B cell (primary cell): ENCODE measurements at regions of chr17 and their contacts with region 1.

Region 1: GRCh38 chr17:43024407-43025289 is at the start of gene RND2:
- DNase-seq: peak; percentile 92
- ATAC-seq: peak; percentile 71
- H3K4me3 ChIP-seq: peak within 1 kb of the TSS; percentile 49 to 77 (median 68)
- H3K4me3 Mint-ChIP-seq: peak within 1 kb of the TSS; percentile 88
- H3K27ac ChIP-seq: peak within 1 kb of the TSS in 1 of 2 donors; percentile 63
- H3K27ac Mint-ChIP-seq: peak within 1 kb of the TSS; percentile 87
- H3K4me1 ChIP-seq: peaks cover 9 to 31% of the 10 kb centered on the region in 2 donors
- H3K4me1 Mint-ChIP-seq: peaks cover 29% of the 10 kb centered on the region
- H3K27me3 ChIP-seq: no peaks in the 10 kb centered on the region
- H3K27me3 Mint-ChIP-seq: no peaks in the 10 kb centered on the region
- CTCF ChIP-seq: peak; percentile 62
- total RNA-seq, gene RND2: 0.44 and 1.2 TPM in 2 replicates

Region 2: GRCh38 chr17:42980398-42981397 is 44.0 kb before region 1 on chr17 and contains the start of gene RUNDC1:
- CTCF ChIA-PET with region 1: interaction called, 5 read pairs
- POLR2A ChIA-PET with region 1: interaction called, 5 read pairs
- intact Hi-C with region 1: loop called (anchors 1 kb)
- DNase-seq: peak; percentile 97
- ATAC-seq: peak; percentile 82
- H3K4me3 ChIP-seq: peak within 1 kb of the TSS; percentile 83 to 90 (median 88)
- H3K4me3 Mint-ChIP-seq: peak within 1 kb of the TSS; percentile 99
- H3K27ac ChIP-seq: peak within 1 kb of the TSS; percentile 80 to 86
- H3K27ac Mint-ChIP-seq: peak within 1 kb of the TSS; percentile 96
- H3K4me1 ChIP-seq: peaks cover 44 to 56% of the 10 kb centered on the region in 2 donors
- H3K4me1 Mint-ChIP-seq: peaks cover 48% of the 10 kb centered on the region
- H3K27me3 ChIP-seq: no peaks in the 10 kb centered on the region
- H3K27me3 Mint-ChIP-seq: no peaks in the 10 kb centered on the region
- CTCF ChIP-seq: peak; percentile 42
- total RNA-seq, gene RUNDC1: 43.7 and 45.6 TPM in 2 replicates

Region 3: GRCh38 chr17:43006639-43007551 is 17.8 kb before region 1 on chr17 and contains the start of gene IFI35:
- CTCF ChIA-PET with region 1: interaction called, 6 read pairs
- POLR2A ChIA-PET with region 1: interaction called, 3 read pairs
- intact Hi-C with region 1: loop called (anchors 1 kb)
- DNase-seq: peak; percentile 89
- ATAC-seq: peak; percentile 99
- H3K4me3 ChIP-seq: peak within 1 kb of the TSS; percentile 73 to 91 (median 82)
- H3K4me3 Mint-ChIP-seq: peak within 1 kb of the TSS; percentile 100
- H3K27ac ChIP-seq: peak within 1 kb of the TSS; percentile 83 to 93
- H3K27ac Mint-ChIP-seq: peak within 1 kb of the TSS; percentile 100
- H3K4me1 ChIP-seq: peaks cover 8 to 13% of the 10 kb centered on the region in 2 donors
- H3K4me1 Mint-ChIP-seq: peaks cover 16% of the 10 kb centered on the region
- H3K27me3 ChIP-seq: no peaks in the 10 kb centered on the region
- H3K27me3 Mint-ChIP-seq: no peaks in the 10 kb centered on the region
- CTCF ChIP-seq: peak; percentile 64
- total RNA-seq, gene IFI35: 34.7 and 37.2 TPM in 2 replicates

Region 4: DNA sequence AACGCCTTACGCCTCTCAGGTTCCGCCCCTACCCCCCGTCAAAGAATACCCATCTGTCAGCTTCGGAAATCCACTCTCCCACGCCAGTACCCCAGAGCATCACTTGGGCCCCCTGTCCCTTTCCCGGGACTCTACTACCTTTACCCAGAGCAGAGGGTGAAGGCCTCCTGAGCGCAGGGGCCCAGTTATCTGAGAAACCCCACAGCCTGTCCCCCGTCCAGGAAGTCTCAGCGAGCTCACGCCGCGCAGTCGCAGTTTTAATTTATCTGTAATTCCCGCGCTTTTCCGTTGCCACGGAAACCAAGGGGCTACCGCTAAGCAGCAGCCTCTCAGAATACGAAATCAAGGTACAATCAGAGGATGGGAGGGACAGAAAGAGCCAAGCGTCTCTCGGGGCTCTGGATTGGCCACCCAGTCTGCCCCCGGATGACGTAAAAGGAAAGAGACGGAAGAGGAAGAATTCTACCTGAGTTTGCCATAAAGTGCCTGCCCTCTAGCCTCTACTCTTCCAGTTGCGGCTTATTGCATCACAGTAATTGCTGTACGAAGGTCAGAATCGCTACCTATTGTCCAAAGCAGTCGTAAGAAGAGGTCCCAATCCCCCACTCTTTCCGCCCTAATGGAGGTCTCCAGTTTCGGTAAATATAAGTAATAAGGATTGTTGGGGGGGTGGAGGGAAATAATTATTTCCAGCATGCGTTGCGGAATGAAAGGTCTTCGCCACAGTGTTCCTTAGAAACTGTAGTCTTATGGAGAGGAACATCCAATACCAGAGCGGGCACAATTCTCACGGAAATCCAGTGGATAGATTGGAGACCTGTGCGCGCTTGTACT is 100.7 kb after region 1 on chr17 and contains the start of gene BRCA1:
- CTCF ChIA-PET with region 1: no interaction called
- POLR2A ChIA-PET with region 1: no interaction called
- intact Hi-C with region 1: loop called (anchors 1 kb)
- DNase-seq: peak; percentile 98
- ATAC-seq: peak; percentile 100
- H3K4me3 ChIP-seq: peak within 1 kb of the TSS; percentile 68 to 97 (median 92)
- H3K4me3 Mint-ChIP-seq: peak within 1 kb of the TSS; percentile 91
- H3K27ac ChIP-seq: peak within 1 kb of the TSS; percentile 60 to 82
- H3K27ac Mint-ChIP-seq: peak within 1 kb of the TSS; percentile 91
- H3K4me1 ChIP-seq: peaks cover 12 to 24% of the 10 kb centered on the region in 2 donors
- H3K4me1 Mint-ChIP-seq: peaks cover 31% of the 10 kb centered on the region
- H3K27me3 ChIP-seq: no peaks in the 10 kb centered on the region
- H3K27me3 Mint-ChIP-seq: no peaks in the 10 kb centered on the region
- CTCF ChIP-seq: no peak
- total RNA-seq, gene BRCA1: 7.2 and 9.0 TPM in 2 replicates

Region 5: DNA sequence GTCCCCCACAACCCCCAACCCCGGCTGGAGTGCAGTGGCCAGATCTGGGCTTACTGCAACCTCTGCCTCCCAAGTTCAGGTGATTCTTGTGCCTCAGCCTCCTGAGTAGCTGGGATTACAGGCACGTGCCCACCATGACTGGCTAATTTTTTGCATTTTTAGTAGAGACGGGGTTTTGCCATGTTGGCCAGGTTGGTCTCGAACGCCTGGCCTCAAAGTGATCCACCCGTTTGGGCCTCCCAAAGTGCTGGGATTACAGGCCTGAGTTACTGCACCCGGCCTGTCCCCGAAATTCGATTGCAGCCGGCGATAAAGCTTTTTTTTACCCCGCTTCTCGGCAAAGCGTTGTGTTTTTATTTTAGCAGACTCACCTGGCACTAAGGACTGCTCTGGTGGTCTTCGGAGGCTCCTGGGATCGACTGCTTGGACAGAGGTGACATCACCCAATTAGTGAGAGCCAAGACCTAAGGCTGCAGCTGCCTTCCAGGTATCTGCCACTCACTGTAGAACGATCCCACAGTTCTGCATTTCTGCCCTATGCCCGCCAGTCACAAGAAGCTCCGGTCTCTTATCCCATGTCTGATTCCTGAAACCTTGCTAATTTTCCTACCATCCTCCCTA is 292.0 kb after region 1 on chr17:
- CTCF ChIA-PET with region 1: no interaction called
- POLR2A ChIA-PET with region 1: interaction called, 30 read pairs
- intact Hi-C with region 1: no loop called
- DNase-seq: peak; percentile 78
- ATAC-seq: no peak
- H3K4me3 ChIP-seq: peak overlapping the region in 1 of 5 experiments; percentile 25
- H3K4me3 Mint-ChIP-seq: peak overlapping the region; percentile 29
- H3K27ac ChIP-seq: peak overlapping the region in 1 of 2 donors; percentile 46
- H3K27ac Mint-ChIP-seq: no peak overlapping the region
- H3K4me1 ChIP-seq: peaks cover 0 to 4% of the 10 kb centered on the region in 2 donors
- H3K4me1 Mint-ChIP-seq: peaks cover 16% of the 10 kb centered on the region
- H3K27me3 ChIP-seq: no peaks in the 10 kb centered on the region
- H3K27me3 Mint-ChIP-seq: no peaks in the 10 kb centered on the region
- CTCF ChIP-seq: no peak

Region 6: GRCh38 chr17:43367737-43368242 is 343.1 kb after region 1 on chr17:
- CTCF ChIA-PET with region 1: no interaction called
- POLR2A ChIA-PET with region 1: interaction called, 11 read pairs
- intact Hi-C with region 1: loop called (anchors 2 kb)
- DNase-seq: no peak
- ATAC-seq: peak; percentile 40
- H3K4me3 ChIP-seq: peak overlapping the region; percentile 59 to 84 (median 64)
- H3K4me3 Mint-ChIP-seq: peak overlapping the region; percentile 99
- H3K27ac ChIP-seq: peak overlapping the region; percentile 96 to 98
- H3K27ac Mint-ChIP-seq: peak overlapping the region; percentile 100
- H3K4me1 ChIP-seq: peaks cover 33 to 50% of the 10 kb centered on the region in 2 donors
- H3K4me1 Mint-ChIP-seq: peaks cover 44% of the 10 kb centered on the region
- H3K27me3 ChIP-seq: no peaks in the 10 kb centered on the region
- H3K27me3 Mint-ChIP-seq: no peaks in the 10 kb centered on the region
- CTCF ChIP-seq: no peak